Activated CD4-positive, alpha-beta T cell treated with anti-CD3 and anti-CD28 coated beads, Interleukin-2, amount 10 ng/mL, durations not matched to agents 24 days and 14 days (primary cell): ENCODE measurements at regions of chr9 and their contacts with region 1.

Region 1: DNA sequence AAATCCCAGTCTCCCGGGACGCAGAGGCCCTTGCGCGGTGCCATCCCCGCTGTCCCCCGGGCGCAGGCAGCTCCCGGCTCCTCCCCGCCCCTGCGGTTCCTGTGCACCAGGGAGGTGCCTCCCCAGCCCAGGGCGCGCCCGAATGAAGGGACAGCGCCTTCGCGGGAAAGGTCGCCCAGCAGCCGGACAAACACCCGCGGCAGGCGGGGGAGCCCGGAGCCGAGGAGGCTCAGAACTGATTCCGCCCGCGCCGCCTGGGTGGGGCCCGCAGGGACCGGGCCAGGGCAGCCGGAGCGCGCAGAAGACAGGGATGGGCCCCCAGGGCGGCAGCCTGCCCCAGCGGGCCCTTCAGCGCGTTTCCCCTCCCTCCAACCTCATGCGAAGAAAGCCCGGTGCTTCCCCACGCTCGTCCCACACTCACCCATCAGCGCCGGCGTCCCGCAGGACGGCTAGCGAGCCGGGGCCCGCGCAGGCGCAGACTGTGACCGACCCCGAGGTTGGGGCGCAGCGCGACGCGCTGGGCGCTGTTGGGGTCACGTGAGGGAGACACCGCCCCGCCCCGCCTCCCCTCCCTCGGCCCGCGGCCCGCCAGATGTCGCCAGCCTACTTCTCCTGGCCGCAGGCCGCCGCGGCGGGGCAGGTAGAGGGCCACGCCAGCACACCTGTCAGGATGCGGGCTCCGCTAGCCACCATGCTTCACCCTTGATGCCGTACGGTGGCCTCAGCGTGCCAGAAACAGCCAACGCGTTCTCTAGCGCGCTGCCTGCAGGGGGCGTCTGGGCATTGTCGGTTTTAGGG is at the start of gene SLC25A51:
- DNase-seq: peak; percentile 98
- H3K4me3 Mint-ChIP-seq: peak within 1 kb of the TSS; percentile 90
- H3K27ac Mint-ChIP-seq: peak within 1 kb of the TSS; percentile 95
- H3K4me1 Mint-ChIP-seq: peaks cover 19% of the 10 kb centered on the region
- H3K27me3 Mint-ChIP-seq: peaks cover 9% of the 10 kb centered on the region
- total RNA-seq, gene SLC25A51: 32.0 and 33.3 TPM in 2 replicates

Region 2: DNA sequence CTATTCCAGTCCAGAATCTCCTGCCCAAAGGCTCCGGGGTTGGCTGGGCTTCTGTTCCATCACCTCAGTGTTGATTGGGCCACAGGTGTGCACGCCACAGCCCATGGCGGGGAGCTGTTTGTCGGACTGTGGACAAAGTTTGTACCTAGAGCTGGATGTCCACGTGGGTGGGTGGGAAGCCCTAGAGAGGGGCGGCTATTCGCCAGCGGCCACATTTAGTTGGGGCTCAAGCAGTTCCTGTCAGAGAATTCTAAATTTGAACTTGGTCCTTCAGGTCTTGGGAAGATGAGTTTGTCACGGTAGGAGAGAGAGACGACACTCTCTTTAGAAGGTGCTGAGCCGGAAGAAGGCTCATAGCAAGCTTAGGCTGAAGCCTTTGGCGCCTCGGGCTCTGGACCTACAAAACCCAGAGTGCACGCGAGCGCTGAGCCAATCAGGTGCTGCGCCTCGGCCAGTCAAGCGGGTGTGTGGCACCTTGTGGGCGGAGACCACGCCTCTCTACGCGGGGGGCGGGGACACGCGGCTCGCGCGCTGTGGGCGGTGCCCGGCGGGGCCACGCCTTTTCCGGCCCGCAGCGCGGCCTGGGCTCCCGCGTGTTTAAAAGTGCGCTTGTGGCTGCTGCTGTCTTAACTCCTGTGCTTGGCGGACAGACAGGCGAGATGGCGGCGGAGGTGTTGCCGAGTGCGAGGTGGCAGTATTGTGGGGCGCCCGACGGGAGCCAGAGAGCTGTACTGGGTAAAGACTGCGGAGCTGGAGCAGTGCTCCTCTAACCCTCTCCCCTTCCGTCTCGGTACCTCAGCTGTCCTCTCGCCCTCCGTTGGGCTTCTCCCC is 418.2 kb before region 1 on chr9 and contains the start of gene POLR1E:
- intact Hi-C with region 1: loop called (anchors 1 kb)
- DNase-seq: peak; percentile 99
- H3K4me3 Mint-ChIP-seq: peak within 1 kb of the TSS; percentile 91
- H3K27ac Mint-ChIP-seq: peak within 1 kb of the TSS; percentile 94
- H3K4me1 Mint-ChIP-seq: peaks cover 33% of the 10 kb centered on the region
- H3K27me3 Mint-ChIP-seq: peaks cover 9% of the 10 kb centered on the region
- total RNA-seq, gene POLR1E: 60.0 and 64.0 TPM in 2 replicates

Region 3: DNA sequence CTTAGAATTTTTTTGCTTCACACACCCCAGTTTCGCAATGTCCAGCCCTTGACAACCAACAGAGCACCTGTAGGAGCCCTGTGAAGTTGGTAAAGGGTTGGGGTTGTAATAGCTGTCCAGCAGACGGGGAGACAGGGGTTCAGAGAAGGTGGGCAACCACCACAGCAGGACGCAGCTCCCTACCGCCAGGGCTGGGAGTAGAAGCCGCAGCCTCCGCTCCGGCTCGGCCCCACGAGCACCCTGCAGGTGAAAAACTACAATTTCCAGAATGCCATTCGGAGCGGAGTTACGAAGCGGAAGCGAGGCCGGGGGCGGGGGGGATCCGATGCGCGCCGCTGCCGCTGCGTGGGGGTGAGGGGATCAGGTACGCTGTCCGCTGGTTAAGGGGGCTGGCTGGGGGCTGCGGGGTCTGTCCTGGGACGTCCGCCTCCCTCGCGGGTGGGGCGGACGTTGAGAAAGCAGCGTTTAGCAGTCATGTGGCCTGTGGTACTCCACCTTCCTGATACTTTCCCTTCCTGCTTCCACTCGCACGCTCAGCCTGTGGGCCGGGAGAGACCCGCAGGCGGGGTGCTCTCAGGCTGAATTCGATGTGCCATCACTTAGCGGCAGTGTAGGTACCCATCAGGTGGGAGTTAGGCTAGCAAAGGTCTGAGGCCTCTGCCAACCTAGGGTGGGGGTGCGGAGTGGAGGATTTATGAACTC is 150.2 kb before region 1 on chr9 and contains the start of gene TRMT10B:
- intact Hi-C with region 1: loop called (anchors 2 kb)
- DNase-seq: peak; percentile 92
- H3K4me3 Mint-ChIP-seq: peak within 1 kb of the TSS; percentile 99
- H3K27ac Mint-ChIP-seq: peak within 1 kb of the TSS; percentile 97
- H3K4me1 Mint-ChIP-seq: peaks cover 22% of the 10 kb centered on the region
- H3K27me3 Mint-ChIP-seq: no peaks in the 10 kb centered on the region
- total RNA-seq, gene TRMT10B: 12.4 and 13.2 TPM in 2 replicates

Region 4: GRCh38 chr9:37800631-37801286 is 103.1 kb before region 1 on chr9 and contains the start of gene DCAF10:
- intact Hi-C with region 1: loop called (anchors 2 kb)
- DNase-seq: peak; percentile 98
- H3K4me3 Mint-ChIP-seq: peak within 1 kb of the TSS; percentile 94
- H3K27ac Mint-ChIP-seq: peak within 1 kb of the TSS; percentile 88
- H3K4me1 Mint-ChIP-seq: peaks cover 29% of the 10 kb centered on the region
- H3K27me3 Mint-ChIP-seq: no peaks in the 10 kb centered on the region
- total RNA-seq, gene DCAF10: 14.5 and 17.8 TPM in 2 replicates

Region 5: GRCh38 chr9:37862530-37862929 is 41.3 kb before region 1 on chr9:
- intact Hi-C with region 1: no loop called
- DNase-seq: no peak
- H3K4me3 Mint-ChIP-seq: no peak overlapping the region
- H3K27ac Mint-ChIP-seq: no peak overlapping the region
- H3K4me1 Mint-ChIP-seq: peaks cover 2% of the 10 kb centered on the region
- H3K27me3 Mint-ChIP-seq: no peaks in the 10 kb centered on the region

Region 6: GRCh38 chr9:38068866-38069629 is 165.2 kb after region 1 on chr9 and contains the start of gene SHB:
- intact Hi-C with region 1: loop called (anchors 2 kb)
- DNase-seq: peak; percentile 91
- H3K4me3 Mint-ChIP-seq: peak within 1 kb of the TSS; percentile 82
- H3K27ac Mint-ChIP-seq: no peak within 1 kb of the TSS
- H3K4me1 Mint-ChIP-seq: peaks cover 14% of the 10 kb centered on the region
- H3K27me3 Mint-ChIP-seq: peaks cover 46% of the 10 kb centered on the region
- total RNA-seq, gene SHB: 1.6 and 2.1 TPM in 2 replicates